Astrocyte of the cerebellum (primary cell): ENCODE measurements at regions of chr4 and their contacts with region 1.

Region 1: GRCh38 chr4:82618103-82618720 is 56.4 kb upstream of the TMEM150C start:
- DNase-seq: peak; percentile 79
- H3K4me3 ChIP-seq: no peak overlapping the region
- CTCF ChIP-seq: no peak

Region 2: GRCh38 chr4:82551714-82552113 is 66.5 kb before region 1 on chr4:
- in situ Hi-C with region 1: no loop called
- DNase-seq: no peak
- H3K4me3 ChIP-seq: no peak overlapping the region
- CTCF ChIP-seq: no peak

Region 3: DNA sequence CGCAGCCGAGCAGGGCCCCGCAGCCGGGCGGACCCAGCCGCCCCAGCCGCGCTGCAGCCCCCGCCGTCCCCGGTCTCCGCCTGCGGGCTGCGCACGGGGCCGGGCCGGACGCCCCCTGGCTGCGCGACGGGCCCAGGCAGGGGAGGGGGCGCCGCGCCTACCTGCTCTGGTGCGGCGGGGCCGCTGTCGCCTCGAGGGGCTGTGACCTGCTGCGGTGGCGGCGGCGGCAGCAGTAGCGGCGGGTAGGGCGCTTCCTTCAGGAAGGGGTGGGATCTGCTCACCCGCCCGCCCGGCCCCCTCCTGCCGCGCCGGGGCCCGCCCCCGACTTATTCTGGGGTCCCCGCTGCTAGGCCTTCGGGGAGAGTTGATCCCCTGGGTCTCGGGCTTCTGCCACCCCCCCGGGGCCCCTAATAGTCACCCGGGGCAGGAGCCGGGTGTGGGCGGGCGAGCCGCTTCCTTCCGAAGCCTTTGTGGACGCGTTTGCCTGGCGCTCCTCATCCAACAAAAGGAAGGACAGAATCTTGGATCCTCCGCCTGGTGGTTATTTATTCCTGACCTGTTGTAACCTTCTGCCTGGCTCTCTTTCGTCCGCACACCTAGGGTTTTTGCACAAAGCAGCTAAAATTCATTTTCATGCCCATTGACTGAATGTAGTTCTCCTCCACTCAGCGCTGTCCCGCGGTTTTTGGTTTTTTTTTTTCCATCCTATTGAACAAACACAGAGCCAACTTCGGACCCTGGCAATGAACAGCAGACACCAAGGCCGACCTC is 56.3 kb before region 1 on chr4 and contains the start of gene TMEM150C:
- in situ Hi-C with region 1: loop called (anchors 5 kb)
- DNase-seq: no peak
- H3K4me3 ChIP-seq: peak within 1 kb of the TSS; percentile 52
- CTCF ChIP-seq: peak; percentile 5

Region 4: DNA sequence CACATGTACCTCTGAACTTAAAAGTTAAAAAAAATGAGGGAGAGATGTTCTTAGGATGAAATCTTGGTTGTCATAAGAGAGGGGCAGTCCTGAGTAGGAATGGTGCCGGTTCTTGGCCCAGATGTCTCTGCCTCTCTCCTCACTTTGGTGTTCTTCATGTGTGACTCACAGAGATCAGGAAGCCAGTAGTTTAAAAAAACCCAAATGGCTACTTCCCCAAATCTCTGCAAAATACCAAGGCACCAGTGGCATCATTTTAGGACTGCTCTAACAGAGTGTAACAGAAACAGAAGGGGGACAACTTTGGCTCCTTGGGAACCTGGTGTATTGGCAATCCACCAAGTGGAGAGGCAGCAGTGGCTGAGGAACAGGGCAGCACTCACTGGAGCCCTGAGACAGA is 63.5 kb after region 1 on chr4:
- in situ Hi-C with region 1: loop called (anchors 5 kb)
- DNase-seq: no peak
- H3K4me3 ChIP-seq: no peak overlapping the region
- CTCF ChIP-seq: no peak